H1 (cell line): ENCODE measurements at regions of chr2 and their contacts with region 1.

Region 1: GRCh38 chr2:218066926-218067515 is 2.0 kb upstream of the RUFY4 start:
- DNase-seq: no peak
- H3K4me3 ChIP-seq: no peak overlapping the region
- H3K27ac ChIP-seq: no peak overlapping the region
- H3K4me1 ChIP-seq: peaks cover 0 to 16% (median 8%) of the 10 kb centered on the region in 4 experiments; a peak in 6 of 7 replicates
- H3K27me3 ChIP-seq: peaks cover 0 to 5% (median 3%) of the 10 kb centered on the region in 4 experiments; a peak in 4 of 7 replicates
- CTCF ChIP-seq: no peak
- EP300 ChIP-seq: no peak
- POLR2A ChIP-seq: no peak
- RAD21 ChIP-seq: no peak

Region 2: DNA sequence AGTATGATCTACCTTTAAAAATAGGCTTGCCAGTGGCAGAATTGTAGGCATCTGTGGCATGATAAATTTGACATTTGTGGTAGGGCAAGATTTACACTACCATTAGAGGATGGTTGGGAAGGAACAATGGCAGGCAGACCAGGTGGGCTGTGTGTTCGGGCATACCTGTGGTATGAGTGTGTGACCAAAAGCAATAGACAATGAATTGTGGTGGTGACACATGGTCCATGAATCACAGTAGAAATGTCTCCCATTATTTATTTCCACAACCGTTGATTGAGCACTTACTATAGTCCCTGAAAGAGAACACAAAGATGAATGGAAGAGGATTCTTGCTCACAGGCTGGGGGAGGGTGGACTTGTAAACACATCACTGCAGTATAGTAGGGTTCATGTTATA is 27.9 kb before region 1 on chr2:
- CTCF ChIA-PET with region 1: no interaction called
- POLR2A ChIA-PET with region 1: no interaction called
- DNase-seq: no peak
- H3K4me3 ChIP-seq: no peak overlapping the region
- H3K27ac ChIP-seq: no peak overlapping the region
- H3K4me1 ChIP-seq: peaks cover 0 to 1% (median 0%) of the 10 kb centered on the region in 4 experiments; a peak in 1 of 7 replicates
- H3K27me3 ChIP-seq: peaks cover 0 to 6% (median 3%) of the 10 kb centered on the region in 4 experiments; a peak in 6 of 7 replicates
- CTCF ChIP-seq: no peak
- EP300 ChIP-seq: no peak
- POLR2A ChIP-seq: no peak
- RAD21 ChIP-seq: no peak

Region 3: DNA sequence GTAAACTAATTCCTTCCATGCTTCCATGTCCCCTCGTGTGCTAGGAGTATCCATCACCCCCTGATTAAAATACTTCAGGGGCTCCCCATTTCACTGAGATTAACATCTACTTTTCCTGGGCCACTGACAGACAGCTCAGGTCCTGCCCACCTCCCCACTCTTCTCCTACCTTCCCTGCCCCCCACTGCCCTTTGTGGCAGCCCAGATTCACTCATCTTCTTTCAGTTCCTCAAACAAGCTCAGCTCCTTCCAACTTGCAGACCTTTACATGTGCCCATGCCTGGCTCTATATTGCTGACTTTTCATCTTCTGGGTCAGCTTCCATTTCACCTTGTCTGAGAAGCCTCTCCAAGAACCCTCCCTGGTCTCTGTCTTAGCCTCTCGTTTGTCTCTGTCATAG is 14.0 kb after region 1 on chr2:
- CTCF ChIA-PET with region 1: interaction called, 10 read pairs
- POLR2A ChIA-PET with region 1: interaction called, 3 read pairs
- DNase-seq: no peak
- H3K4me3 ChIP-seq: no peak overlapping the region
- H3K27ac ChIP-seq: no peak overlapping the region
- H3K4me1 ChIP-seq: peaks cover 0 to 5% (median 0%) of the 10 kb centered on the region in 4 experiments; a peak in 1 of 7 replicates
- H3K27me3 ChIP-seq: no peaks in the 10 kb centered on the region
- CTCF ChIP-seq: no peak
- EP300 ChIP-seq: no peak
- POLR2A ChIP-seq: no peak
- RAD21 ChIP-seq: no peak